ENCODE measurements at regions of chr6 and their contacts with region 1.

Region 1: DNA sequence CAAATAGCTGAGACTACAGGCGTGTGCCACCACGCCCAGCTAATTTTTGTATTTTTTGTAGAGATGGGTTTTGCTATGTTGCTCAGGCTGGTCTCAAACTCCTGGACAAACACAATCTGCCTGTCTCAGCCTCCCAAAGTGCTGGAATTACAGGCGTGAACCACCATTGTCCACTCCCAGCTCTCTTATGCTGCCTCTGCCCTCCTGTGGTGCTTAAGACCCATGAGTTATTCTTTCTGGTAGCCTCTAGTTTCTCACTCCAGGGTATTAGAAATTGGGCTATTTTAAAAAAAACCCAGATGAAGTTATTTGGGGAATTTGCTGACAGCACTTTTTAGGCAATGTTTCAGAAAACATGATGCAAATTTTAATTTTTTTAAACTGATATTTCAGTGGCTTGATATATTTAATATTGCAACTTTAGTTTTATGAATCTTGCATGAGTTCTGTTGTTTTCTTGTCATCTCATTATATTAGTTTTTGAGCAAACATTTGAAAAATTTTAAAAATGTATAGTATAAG is 114.0 kb upstream of the FOXO3 start:
- DNase-seq: no peak
- H3K4me3 Mint-ChIP-seq: no peak overlapping the region
- H3K27ac Mint-ChIP-seq: no peak overlapping the region
- H3K4me1 Mint-ChIP-seq: peaks cover 10% of the 10 kb centered on the region
- H3K27me3 Mint-ChIP-seq: peaks cover 45% of the 10 kb centered on the region

Region 2: GRCh38 chr6:108294727-108295625 is 151.7 kb before region 1 on chr6 and contains the start of gene AFG1L:
- intact Hi-C with region 1: loop called (anchors 5 kb)
- DNase-seq: peak; percentile 96
- H3K4me3 Mint-ChIP-seq: peak within 1 kb of the TSS; percentile 99
- H3K27ac Mint-ChIP-seq: peak within 1 kb of the TSS; percentile 100
- H3K4me1 Mint-ChIP-seq: peaks cover 21% of the 10 kb centered on the region
- H3K27me3 Mint-ChIP-seq: peaks cover 1% of the 10 kb centered on the region
- total RNA-seq, gene AFG1L: 6.0 and 6.3 TPM in 2 replicates

Region 3: GRCh38 chr6:108473197-108473596 is 26.5 kb after region 1 on chr6:
- intact Hi-C with region 1: loop called (anchors 1 kb)
- DNase-seq: no peak
- H3K4me3 Mint-ChIP-seq: no peak overlapping the region
- H3K27ac Mint-ChIP-seq: no peak overlapping the region
- H3K4me1 Mint-ChIP-seq: peaks cover 1% of the 10 kb centered on the region
- H3K27me3 Mint-ChIP-seq: peaks cover 59% of the 10 kb centered on the region

Region 4: GRCh38 chr6:108883172-108883571 is 436.5 kb after region 1 on chr6:
- intact Hi-C with region 1: loop called (anchors 5 kb)
- DNase-seq: no peak
- H3K4me3 Mint-ChIP-seq: peak overlapping the region; percentile 24
- H3K27ac Mint-ChIP-seq: peak overlapping the region; percentile 87
- H3K4me1 Mint-ChIP-seq: peaks cover 31% of the 10 kb centered on the region
- H3K27me3 Mint-ChIP-seq: peaks cover 28% of the 10 kb centered on the region